H1 (cell line): ENCODE measurements at regions of chr13 and their contacts with region 1.

Region 1: DNA sequence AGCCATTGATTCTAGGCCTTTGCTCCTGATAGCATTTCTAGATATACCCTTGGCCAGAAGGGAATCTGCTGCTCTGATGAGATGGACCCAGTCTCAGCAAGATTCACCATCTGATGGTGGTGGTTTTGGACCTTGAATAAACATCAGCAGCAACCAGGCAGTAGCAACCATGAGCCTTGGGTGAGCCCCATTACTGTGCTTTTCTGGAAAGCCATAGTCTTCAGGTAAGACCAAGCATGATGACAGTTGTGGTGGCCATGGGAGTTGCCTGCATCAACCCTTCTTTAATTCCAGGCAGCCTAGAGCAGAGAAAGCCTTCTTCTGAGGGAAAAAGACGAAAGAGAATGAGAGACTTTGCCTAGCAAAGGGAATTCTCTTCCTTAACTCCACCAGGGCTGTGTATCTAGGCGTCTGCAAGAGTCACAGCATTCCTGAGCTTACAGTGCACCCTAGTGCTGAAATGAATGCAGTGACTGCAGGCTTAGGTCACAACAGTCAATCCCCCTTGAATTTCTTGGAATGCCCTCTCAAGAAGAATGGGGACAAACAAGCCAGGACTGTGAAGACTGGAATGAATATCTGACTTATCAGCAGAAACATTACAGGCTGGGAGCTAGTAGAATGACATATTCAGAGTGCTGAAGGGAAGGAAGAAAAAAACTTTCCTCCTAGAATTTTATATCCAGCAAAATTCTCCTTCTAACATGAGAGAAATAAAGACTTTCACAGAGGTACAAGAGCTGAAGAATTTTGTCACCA is 942.4 kb upstream of the PCDH20 start:
- DNase-seq: peak in 1 of 2 experiments; percentile 39
- H3K4me3 ChIP-seq: no peak overlapping the region
- H3K27ac ChIP-seq: no peak overlapping the region
- H3K4me1 ChIP-seq: peaks cover 0 to 4% (median 0%) of the 10 kb centered on the region in 4 experiments; a peak in 2 of 7 replicates
- H3K27me3 ChIP-seq: no peaks in the 10 kb centered on the region
- CTCF ChIP-seq: peak; percentile 41 to 94 (median 90)
- EP300 ChIP-seq: no peak
- POLR2A ChIP-seq: no peak
- RAD21 ChIP-seq: peak; percentile 99

Region 2: DNA sequence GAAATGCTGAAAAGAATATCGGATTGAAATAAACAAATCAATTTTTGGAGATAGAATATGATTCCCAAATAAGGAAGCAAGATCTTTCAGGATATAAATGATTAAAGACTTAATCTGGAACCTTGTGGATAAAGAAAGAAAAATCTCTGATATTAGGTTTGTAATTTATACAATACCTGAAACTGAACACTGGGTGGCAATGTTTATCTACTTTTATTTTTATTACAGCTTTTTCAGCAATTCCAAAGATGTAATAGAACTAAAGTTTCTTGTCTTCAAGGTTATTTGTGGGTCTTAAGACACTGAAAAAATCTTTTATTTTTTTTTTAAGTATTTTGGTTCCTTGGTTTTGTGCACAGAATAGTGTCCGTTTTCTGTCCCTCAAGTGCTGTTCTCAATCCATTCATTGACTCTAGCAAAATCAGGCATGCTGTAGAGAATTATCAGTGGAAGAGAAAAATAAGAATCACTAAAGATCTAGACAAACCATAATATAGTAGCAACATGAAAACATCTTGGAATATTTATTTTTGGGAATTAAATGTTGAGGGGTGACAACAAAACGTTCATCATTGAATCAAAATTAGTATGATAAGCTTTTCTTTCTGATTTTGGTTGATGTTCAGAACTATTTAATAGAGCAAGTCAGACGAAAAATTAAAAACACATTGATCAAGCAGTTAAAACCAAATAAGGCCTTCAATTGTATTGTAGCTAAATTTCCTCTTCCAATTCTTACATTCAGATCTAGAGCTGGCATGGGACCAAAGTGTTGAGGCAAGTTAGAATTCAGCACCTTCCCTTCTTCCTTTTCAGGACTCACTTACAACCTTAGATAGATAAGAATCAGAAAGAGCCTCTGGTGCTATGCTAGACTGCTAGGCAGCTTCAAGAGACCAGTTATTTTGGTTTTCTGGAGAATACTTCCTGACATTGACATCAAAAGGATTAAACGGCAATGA is 238.0 kb before region 1 on chr13:
- CTCF ChIA-PET with region 1: interaction called, 48 read pairs
- POLR2A ChIA-PET with region 1: no interaction called
- DNase-seq: no peak
- H3K4me3 ChIP-seq: no peak overlapping the region
- H3K27ac ChIP-seq: no peak overlapping the region
- H3K4me1 ChIP-seq: no peaks in the 10 kb centered on the region
- H3K27me3 ChIP-seq: no peaks in the 10 kb centered on the region
- CTCF ChIP-seq: no peak; a peak in 1 of 4 replicates
- EP300 ChIP-seq: no peak
- POLR2A ChIP-seq: no peak
- RAD21 ChIP-seq: peak in 1 of 2 experiments; percentile 63

Region 3: DNA sequence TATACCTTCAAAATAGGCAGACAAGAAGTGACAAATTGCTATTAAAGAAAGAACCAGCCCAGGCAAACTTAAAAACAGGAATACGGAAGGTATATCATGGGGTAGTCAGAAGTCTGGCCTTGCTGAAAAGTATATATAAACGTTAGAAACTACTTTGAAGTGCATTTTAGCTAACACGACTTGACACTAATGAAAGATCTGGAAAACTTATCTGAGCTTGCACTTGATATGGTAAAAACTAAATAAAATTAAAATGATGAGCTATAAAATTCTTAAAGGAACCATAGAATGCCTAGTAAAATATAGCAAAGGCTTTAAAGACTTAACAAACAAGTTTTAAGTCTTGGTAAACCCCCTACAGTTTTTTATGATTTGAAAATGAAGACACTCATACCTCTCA is 147.1 kb before region 1 on chr13:
- CTCF ChIA-PET with region 1: interaction called, 10 read pairs
- POLR2A ChIA-PET with region 1: no interaction called
- DNase-seq: no peak
- H3K4me3 ChIP-seq: no peak overlapping the region
- H3K27ac ChIP-seq: no peak overlapping the region
- H3K4me1 ChIP-seq: no peaks in the 10 kb centered on the region
- H3K27me3 ChIP-seq: no peaks in the 10 kb centered on the region
- CTCF ChIP-seq: no peak
- EP300 ChIP-seq: no peak
- POLR2A ChIP-seq: no peak
- RAD21 ChIP-seq: no peak

Region 4: GRCh38 chr13:62309904-62310303 is 48.2 kb before region 1 on chr13:
- CTCF ChIA-PET with region 1: no interaction called
- POLR2A ChIA-PET with region 1: no interaction called
- DNase-seq: peak in 1 of 2 experiments; percentile 13
- H3K4me3 ChIP-seq: no peak overlapping the region
- H3K27ac ChIP-seq: no peak overlapping the region
- H3K4me1 ChIP-seq: peaks cover 0 to 9% (median 3%) of the 10 kb centered on the region in 4 experiments; a peak in 5 of 7 replicates
- H3K27me3 ChIP-seq: no peaks in the 10 kb centered on the region
- CTCF ChIP-seq: no peak
- EP300 ChIP-seq: peak in 1 of 2 experiments; percentile 57; a peak in 1 of 3 replicates
- POLR2A ChIP-seq: no peak
- RAD21 ChIP-seq: no peak

Region 5: GRCh38 chr13:62320129-62321108 is 37.6 kb before region 1 on chr13:
- CTCF ChIA-PET with region 1: interaction called, 11 read pairs
- POLR2A ChIA-PET with region 1: no interaction called
- DNase-seq: no peak
- H3K4me3 ChIP-seq: no peak overlapping the region
- H3K27ac ChIP-seq: no peak overlapping the region
- H3K4me1 ChIP-seq: no peaks in the 10 kb centered on the region
- H3K27me3 ChIP-seq: peaks cover 0 to 1% (median 0%) of the 10 kb centered on the region in 4 experiments; a peak in 1 of 7 replicates
- CTCF ChIP-seq: peak in 2 of 3 experiments; percentile 26 to 40; a peak in 2 of 4 replicates
- EP300 ChIP-seq: no peak
- POLR2A ChIP-seq: no peak
- RAD21 ChIP-seq: peak; percentile 75 to 83

Region 6: DNA sequence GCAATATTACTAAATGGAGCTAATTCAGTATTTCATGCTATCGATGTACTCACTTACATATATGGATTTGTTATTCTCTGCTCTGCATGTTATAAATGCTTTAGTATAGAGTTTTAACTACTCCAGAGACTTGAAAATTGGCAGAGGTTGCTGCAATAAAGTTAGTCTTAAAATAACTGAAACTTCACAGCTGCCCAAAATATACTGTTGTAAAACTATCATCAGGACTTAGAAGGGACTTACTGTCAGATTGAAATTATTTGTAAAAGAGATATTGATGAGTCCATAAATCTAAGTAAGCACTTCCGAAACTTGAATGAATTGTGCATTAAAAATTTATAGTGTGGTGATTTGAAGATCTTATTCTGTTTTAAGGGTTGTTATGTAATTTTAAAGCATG is 235.7 kb after region 1 on chr13:
- CTCF ChIA-PET with region 1: no interaction called
- POLR2A ChIA-PET with region 1: no interaction called
- DNase-seq: no peak
- H3K4me3 ChIP-seq: no peak overlapping the region
- H3K27ac ChIP-seq: no peak overlapping the region
- H3K4me1 ChIP-seq: peaks cover 0 to 2% (median 0%) of the 10 kb centered on the region in 4 experiments; a peak in 1 of 7 replicates
- H3K27me3 ChIP-seq: no peaks in the 10 kb centered on the region
- CTCF ChIP-seq: no peak
- EP300 ChIP-seq: no peak
- POLR2A ChIP-seq: no peak
- RAD21 ChIP-seq: no peak

Region 7: DNA sequence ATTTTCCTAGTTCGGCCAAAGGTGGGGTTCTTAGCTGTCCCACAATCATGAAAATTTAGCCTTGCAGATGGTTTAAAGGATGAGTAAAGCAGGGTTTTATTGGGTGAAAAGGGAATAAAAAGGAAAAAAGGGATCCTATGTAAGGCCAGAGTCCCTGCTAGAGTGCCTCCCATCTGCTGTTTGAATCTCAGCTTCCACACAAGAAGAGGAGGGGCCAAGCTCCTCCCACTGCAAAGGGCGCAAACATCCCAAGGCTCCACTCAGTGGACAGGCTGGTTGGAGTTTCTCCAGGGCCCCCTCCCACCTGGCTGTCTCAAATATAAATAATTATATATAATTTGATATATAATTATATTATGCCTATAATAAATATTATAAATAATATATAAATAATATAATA is 329.7 kb after region 1 on chr13:
- CTCF ChIA-PET with region 1: no interaction called
- POLR2A ChIA-PET with region 1: no interaction called
- DNase-seq: no peak
- H3K4me3 ChIP-seq: no peak overlapping the region
- H3K27ac ChIP-seq: no peak overlapping the region
- H3K4me1 ChIP-seq: peaks cover 0 to 4% (median 0%) of the 10 kb centered on the region in 4 experiments; a peak in 1 of 7 replicates
- H3K27me3 ChIP-seq: no peaks in the 10 kb centered on the region
- CTCF ChIP-seq: no peak
- EP300 ChIP-seq: no peak
- POLR2A ChIP-seq: no peak
- RAD21 ChIP-seq: no peak